ENCODE measurements at regions of chr2 and their contacts with region 1.

Region 1: DNA sequence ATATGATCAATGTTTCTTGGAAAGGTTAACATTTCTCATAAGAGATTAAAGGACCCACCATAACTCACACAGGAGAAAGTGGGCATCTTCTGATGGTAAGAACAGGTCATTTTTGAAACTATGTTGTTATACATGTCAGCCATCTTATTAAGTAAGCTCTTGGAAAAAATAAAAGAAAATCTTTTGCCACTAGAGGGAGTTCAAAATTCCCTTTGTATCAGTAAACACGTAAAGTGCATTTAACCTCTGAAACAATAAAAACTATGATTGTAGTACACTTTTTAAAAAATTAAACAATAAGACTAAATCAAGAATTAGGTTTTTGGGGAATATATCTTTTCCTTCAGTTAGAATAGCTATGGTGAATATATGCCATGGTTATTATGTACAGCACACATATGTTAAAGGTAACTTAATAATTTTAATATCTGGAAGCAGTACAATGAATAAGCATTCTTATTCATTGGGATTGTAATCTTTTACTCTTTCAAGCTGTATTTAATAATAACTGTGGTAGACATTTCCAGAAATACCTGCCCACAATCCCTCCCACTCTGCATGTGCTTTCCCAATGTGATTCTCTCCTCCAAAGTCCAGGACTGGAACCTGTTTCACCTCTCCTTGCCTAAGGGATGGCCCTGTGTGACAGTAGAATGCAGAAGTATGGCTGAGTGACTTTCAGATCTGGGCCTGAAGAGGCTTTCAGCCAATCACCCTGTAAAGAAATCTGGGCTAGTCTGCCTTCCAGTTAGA is 64.2 kb downstream of the RBMS1 start:
- DNase-seq: no peak
- H3K4me3 ChIP-seq: no peak overlapping the region
- CTCF ChIP-seq: peak; percentile 9

Region 2: DNA sequence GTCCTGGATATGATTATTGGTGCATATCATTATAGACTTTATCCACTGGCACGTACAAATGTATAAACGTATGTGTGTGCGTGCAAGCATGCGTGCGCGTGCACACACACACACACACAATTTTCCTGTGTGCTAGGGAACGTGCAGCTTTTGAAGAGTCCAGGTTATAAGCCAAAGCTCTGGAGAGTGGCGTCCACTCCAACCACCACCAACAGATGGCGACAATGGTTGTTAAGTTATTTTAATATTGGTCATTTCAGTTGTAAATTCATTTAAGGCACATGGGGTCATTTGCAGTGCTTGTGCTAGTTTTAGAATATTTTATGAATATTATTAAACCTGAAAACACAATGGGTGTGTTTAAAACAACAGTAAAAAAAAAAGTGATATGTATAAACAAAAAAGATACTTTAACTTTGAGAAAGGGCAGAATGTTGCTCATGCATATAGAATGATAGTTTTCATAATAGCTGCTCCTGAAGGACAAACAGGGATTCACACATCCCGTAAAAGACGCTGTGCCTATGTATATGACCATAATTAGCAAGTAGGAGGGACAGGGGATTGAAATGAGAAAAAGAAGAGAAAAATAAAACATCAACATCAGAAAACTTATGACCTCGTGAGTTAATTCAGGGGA is 105.1 kb before region 1 on chr2:
- CTCF ChIA-PET with region 1: interaction called, 17 read pairs
- POLR2A ChIA-PET with region 1: no interaction called
- DNase-seq: no peak
- H3K4me3 ChIP-seq: no peak overlapping the region
- CTCF ChIP-seq: peak; percentile 62

Region 3: DNA sequence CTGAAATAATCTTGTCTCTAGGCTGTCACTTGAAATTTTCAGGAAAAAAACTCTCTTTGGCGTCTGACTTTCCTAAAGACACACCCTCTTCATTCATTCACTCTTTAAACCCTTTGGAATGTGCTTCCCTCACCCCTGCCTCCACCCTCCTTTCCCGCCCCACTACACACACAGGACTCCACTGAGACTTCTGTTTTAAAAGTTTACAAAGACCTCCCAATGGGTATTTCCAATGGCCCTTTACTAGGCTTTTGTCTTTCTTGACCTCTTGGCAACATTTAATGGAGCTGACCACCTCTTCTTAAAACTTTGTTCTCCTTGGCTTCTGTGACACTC is 31.9 kb before region 1 on chr2:
- CTCF ChIA-PET with region 1: no interaction called
- POLR2A ChIA-PET with region 1: no interaction called
- DNase-seq: no peak
- H3K4me3 ChIP-seq: no peak overlapping the region
- CTCF ChIP-seq: no peak

Region 4: DNA sequence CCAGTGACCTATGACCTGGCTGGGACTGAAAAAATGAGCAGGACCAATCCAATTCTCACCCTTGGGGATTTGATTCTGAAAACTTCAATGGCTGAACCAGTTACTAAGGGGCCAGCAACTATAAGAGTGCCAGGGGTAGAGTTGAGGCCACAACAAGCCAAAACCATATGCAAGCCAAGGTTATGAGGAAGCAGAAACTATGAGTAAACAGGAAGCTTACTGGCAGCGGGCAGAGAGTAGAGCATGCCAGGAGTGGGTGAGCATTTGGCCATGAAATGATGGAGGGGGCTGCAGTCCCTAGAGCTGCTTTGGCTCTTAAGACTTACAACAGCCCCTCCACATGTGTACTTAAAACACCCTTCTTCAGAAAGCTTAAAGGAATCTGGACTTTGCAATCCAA is 18.3 kb before region 1 on chr2:
- CTCF ChIA-PET with region 1: interaction called, 30 read pairs
- POLR2A ChIA-PET with region 1: no interaction called
- DNase-seq: no peak
- H3K4me3 ChIP-seq: no peak overlapping the region
- CTCF ChIP-seq: no peak

Region 5: DNA sequence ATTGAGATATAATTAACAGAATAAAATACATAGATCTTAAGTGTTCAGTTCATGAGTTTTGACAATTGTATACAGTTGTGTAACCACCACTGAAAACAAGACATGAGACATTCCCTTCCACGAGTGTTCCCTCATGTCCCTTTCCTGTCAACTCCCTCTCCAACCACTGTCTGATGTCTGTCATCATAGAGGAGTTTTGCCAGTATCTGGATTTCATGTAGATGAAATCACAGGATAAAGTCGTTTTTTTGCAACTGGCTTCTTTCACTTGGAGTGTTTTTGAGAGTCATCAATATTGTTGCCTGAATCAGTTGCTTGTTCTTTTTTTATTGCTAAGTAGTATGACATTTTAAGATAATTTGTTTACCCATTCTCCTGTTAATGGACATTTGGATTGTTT is 11.5 kb after region 1 on chr2:
- CTCF ChIA-PET with region 1: interaction called, 10 read pairs
- POLR2A ChIA-PET with region 1: no interaction called
- DNase-seq: no peak
- H3K4me3 ChIP-seq: no peak overlapping the region
- CTCF ChIP-seq: no peak

Region 6: GRCh38 chr2:160970052-160970965 is 540.9 kb after region 1 on chr2:
- CTCF ChIA-PET with region 1: interaction called, 10 read pairs
- POLR2A ChIA-PET with region 1: no interaction called
- DNase-seq: no peak
- H3K4me3 ChIP-seq: no peak overlapping the region
- CTCF ChIP-seq: peak; percentile 55

Measured in AG04449 (cell line).